Mammary epithelial cell (primary cell): ENCODE measurements at regions of chr18 and their contacts with region 1.

Region 1: GRCh38 chr18:42298759-42299675 is 344.0 kb downstream of the PIK3C3 start:
- DNase-seq: peak; percentile 43
- H3K4me3 ChIP-seq: no peak overlapping the region
- H3K27ac ChIP-seq: no peak overlapping the region
- H3K4me1 ChIP-seq: no peaks in the 10 kb centered on the region
- H3K27me3 ChIP-seq: no peaks in the 10 kb centered on the region
- CTCF ChIP-seq: peak; percentile 88 to 93

Region 2: GRCh38 chr18:42126586-42126985 is 172.4 kb before region 1 on chr18:
- CTCF ChIA-PET with region 1: no interaction called
- dilution Hi-C with region 1: no loop called
- in situ Hi-C with region 1: loop called in 1 of 2 experiments (anchors 10 kb)
- intact Hi-C with region 1: no loop called
- DNase-seq: peak; percentile 32
- H3K4me3 ChIP-seq: no peak overlapping the region
- H3K27ac ChIP-seq: no peak overlapping the region
- H3K4me1 ChIP-seq: no peaks in the 10 kb centered on the region
- H3K27me3 ChIP-seq: peaks cover 2% of the 10 kb centered on the region
- CTCF ChIP-seq: no peak

Region 3: DNA sequence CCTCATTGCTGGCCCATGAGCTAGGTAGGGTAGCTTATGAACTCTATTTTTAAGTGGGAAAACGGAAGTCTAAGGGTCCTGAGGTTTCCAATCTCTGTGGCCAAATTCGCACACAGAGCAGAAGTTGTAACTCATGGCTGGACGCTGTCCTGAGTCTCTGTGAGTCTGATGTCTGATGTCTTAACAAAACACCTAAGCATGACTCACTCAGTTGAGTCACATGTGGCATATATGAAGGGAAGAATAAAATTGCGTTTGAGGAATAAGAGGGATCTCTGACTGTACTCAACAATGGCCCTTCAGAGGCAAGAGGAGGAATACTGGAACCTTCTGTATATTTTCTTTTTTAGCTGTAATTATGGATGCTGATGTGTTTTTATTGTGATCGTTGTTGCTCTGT is 246.8 kb after region 1 on chr18:
- CTCF ChIA-PET with region 1: no interaction called
- dilution Hi-C with region 1: no loop called
- in situ Hi-C with region 1: no loop called
- intact Hi-C with region 1: loop called (anchors 10 kb)
- DNase-seq: peak; percentile 84
- H3K4me3 ChIP-seq: no peak overlapping the region
- H3K27ac ChIP-seq: no peak overlapping the region
- H3K4me1 ChIP-seq: peaks cover 4% of the 10 kb centered on the region
- H3K27me3 ChIP-seq: no peaks in the 10 kb centered on the region
- CTCF ChIP-seq: no peak

Region 4: DNA sequence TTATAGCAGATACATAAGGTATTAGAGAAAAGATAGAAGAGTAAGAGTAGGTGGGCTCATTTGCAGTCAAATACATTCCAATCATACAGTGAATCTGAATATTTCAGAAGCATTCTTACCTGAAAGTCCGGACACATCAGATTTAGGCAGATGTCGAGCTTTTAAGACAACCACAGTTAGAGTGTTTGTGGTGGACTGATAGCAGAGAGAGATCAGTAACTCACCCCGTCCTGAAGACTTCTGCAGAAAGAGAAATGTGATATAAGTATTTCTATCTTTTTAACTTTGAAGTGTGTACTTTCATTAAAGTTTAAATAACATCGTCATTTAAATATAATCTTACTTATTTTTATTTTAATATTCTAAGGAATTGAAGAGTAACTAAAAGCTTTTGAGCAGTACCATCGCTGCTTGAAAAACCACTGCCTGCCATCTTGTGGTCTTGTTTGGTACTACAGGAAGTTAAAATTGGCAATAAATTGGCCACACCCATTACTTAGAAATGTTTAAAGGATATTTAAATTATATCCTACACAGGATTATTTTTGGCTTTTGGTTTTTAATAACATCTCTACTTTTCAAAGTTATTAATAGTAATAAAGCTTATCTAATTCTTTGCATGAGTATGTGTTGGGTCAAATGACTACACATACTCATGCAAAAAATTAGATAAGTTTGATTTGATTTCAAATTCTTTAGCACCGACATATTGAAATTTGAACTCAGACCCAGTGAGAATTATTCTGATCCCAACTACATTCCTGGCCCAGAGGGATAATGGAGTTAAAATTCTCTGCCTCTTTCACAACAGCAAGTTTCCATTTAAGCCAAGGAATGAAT is 972.8 kb after region 1 on chr18:
- CTCF ChIA-PET with region 1: interaction called, 3 read pairs
- dilution Hi-C with region 1: no loop called
- in situ Hi-C with region 1: loop called in 1 of 2 experiments (anchors 25 kb)
- intact Hi-C with region 1: loop called (anchors 5 kb)
- DNase-seq: peak; percentile 26
- H3K4me3 ChIP-seq: no peak overlapping the region
- H3K27ac ChIP-seq: no peak overlapping the region
- H3K4me1 ChIP-seq: no peaks in the 10 kb centered on the region
- H3K27me3 ChIP-seq: no peaks in the 10 kb centered on the region
- CTCF ChIP-seq: peak; percentile 74 to 78

Region 5: DNA sequence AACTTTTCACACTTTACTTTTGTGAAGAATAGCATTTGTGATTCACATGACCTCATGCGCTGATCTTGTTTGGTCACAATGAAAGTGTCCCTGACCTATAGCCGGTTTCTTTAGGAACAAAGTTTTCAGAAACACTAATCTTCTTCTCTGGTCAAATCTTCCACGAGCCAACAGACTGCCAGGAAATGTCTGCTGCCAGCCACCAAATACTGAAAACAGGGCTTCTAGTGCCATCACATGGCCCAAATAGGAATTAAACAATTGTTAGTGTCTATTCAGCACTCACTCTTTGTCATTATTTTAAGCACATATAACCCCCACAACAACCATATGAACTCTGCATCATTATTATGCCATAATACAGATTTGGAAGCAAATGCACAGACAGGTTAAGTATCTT is 1264.8 kb after region 1 on chr18:
- CTCF ChIA-PET with region 1: no interaction called
- dilution Hi-C with region 1: no loop called
- in situ Hi-C with region 1: loop called in 1 of 2 experiments (anchors 25 kb)
- intact Hi-C with region 1: loop called (anchors 5 kb)
- DNase-seq: peak; percentile 30
- H3K4me3 ChIP-seq: no peak overlapping the region
- H3K27ac ChIP-seq: no peak overlapping the region
- H3K4me1 ChIP-seq: no peaks in the 10 kb centered on the region
- H3K27me3 ChIP-seq: no peaks in the 10 kb centered on the region
- CTCF ChIP-seq: peak; percentile 59 to 64